ENCODE measurements at regions of chr7 and their contacts with region 1.

Region 1: GRCh38 chr7:44375236-44375699 is 49.9 kb upstream of the CAMK2B start:
- DNase-seq: peak in 1 of 2 donors; percentile 64
- ATAC-seq: peak; percentile 67 to 73
- H3K4me3 ChIP-seq: no peak overlapping the region
- H3K27ac ChIP-seq: no peak overlapping the region
- H3K4me1 ChIP-seq: no peaks in the 10 kb centered on the region
- H3K27me3 ChIP-seq: no peaks in the 10 kb centered on the region
- CTCF ChIP-seq: peak; percentile 62 to 79 (median 70)
- POLR2A ChIP-seq: no peak

Region 2: GRCh38 chr7:44307301-44307900 is 67.9 kb before region 1 on chr7:
- in situ Hi-C with region 1: no loop called
- intact Hi-C with region 1: no loop called
- DNase-seq: no peak
- ATAC-seq: peak; percentile 26 to 40
- H3K4me3 ChIP-seq: no peak overlapping the region
- H3K27ac ChIP-seq: peak overlapping the region; percentile 1 to 83 (median 41)
- H3K4me1 ChIP-seq: peaks cover 20 to 36% of the 10 kb centered on the region in 2 donors
- H3K27me3 ChIP-seq: no peaks in the 10 kb centered on the region
- CTCF ChIP-seq: no peak
- POLR2A ChIP-seq: no peak

Region 3: GRCh38 chr7:44565097-44565794 is 190.0 kb after region 1 on chr7:
- in situ Hi-C with region 1: no loop called
- intact Hi-C with region 1: loop called (anchors 10 kb)
- DNase-seq: peak; percentile 28 to 65
- ATAC-seq: peak; percentile 89 to 92
- H3K4me3 ChIP-seq: no peak overlapping the region
- H3K27ac ChIP-seq: peak overlapping the region in 3 of 4 donors; percentile 28 to 56 (median 42)
- H3K4me1 ChIP-seq: peaks cover 2 to 5% of the 10 kb centered on the region in 2 donors
- H3K27me3 ChIP-seq: no peaks in the 10 kb centered on the region
- CTCF ChIP-seq: peak; percentile 92 to 99 (median 96)
- POLR2A ChIP-seq: no peak

Region 4: DNA sequence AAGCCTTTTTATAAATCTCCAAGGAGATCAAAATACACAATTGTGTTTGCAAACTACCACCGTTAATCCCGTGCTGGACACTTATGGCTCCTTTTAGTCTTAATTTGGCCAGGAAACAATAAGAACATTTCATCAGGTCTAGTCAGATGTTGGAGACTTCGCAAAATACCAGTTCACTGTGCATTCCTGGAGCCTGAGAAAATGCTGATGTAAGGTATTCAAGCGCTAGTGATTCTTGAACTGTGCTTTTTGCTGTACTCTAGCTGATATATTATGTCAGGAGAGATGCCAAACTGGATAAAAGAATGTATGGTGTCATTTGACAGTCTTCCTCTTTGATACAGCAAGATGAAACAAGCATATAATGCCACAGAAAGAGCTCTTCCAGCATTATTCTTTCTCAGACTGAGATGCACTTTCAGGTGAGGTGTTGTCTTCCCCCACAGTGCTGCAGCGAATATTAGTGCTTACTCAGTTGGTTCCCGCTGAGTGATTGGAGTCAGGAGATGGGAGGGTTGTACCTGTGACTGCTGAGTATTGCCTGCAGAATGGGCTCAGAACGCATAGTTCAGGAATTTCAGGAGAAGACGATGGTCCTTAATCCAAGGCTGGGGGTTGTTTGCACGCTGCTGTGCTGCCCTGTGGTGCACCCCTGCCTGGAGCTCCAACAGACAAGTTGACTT is 290.4 kb after region 1 on chr7:
- in situ Hi-C with region 1: no loop called
- intact Hi-C with region 1: no loop called
- DNase-seq: peak in 1 of 2 donors; percentile 6
- ATAC-seq: no peak
- H3K4me3 ChIP-seq: no peak overlapping the region
- H3K27ac ChIP-seq: peak overlapping the region; percentile 16 to 59 (median 42)
- H3K4me1 ChIP-seq: peaks cover 12 to 18% of the 10 kb centered on the region in 2 donors
- H3K27me3 ChIP-seq: no peaks in the 10 kb centered on the region
- CTCF ChIP-seq: no peak
- POLR2A ChIP-seq: no peak